Common myeloid progenitor, CD34-positive (primary cell): ENCODE measurements at regions of chr7 and their contacts with region 1.

Region 1: GRCh38 chr7:98841179-98841997 is 28.4 kb downstream of the TMEM130 start:
- DNase-seq: peak; percentile 46 to 66 (median 53)
- H3K4me3 ChIP-seq: no peak overlapping the region
- H3K27ac ChIP-seq: no peak overlapping the region
- H3K4me1 ChIP-seq: no peaks in the 10 kb centered on the region
- H3K27me3 ChIP-seq: peaks cover 0 to 6% (median 0%) of the 10 kb centered on the region in 5 experiments

Region 2: GRCh38 chr7:98420966-98421612 is 420.3 kb before region 1 on chr7:
- CTCF ChIA-PET with region 1: interaction called, 165 read pairs
- POLR2A ChIA-PET with region 1: no interaction called
- DNase-seq: peak; percentile 51 to 65 (median 61)
- H3K4me3 ChIP-seq: no peak overlapping the region
- H3K27ac ChIP-seq: no peak overlapping the region
- H3K4me1 ChIP-seq: peaks cover 0 to 3% (median 0%) of the 10 kb centered on the region in 4 experiments
- H3K27me3 ChIP-seq: peaks cover 0 to 8% (median 3%) of the 10 kb centered on the region in 5 experiments

Region 3: DNA sequence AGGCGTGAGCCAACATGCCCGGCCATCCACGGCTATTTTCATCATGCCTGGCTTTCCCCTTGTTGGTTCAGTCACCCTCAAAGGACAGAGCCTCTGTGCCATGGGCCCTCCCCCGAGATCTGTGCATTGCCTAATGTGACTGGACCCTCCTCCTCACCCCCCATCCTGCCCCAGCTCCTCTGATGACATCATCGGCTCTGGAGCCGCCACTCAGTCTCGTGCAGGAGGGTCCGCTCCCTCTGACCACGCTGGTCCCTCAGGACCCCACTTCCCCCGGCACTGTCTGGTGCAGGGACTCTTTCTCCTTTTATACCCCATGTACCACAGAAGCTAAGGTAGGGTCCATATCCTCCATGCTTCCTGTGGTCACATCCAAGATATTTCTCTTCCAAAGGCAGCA is 407.3 kb before region 1 on chr7:
- CTCF ChIA-PET with region 1: interaction called, 165 read pairs
- POLR2A ChIA-PET with region 1: no interaction called
- DNase-seq: no peak
- H3K4me3 ChIP-seq: no peak overlapping the region
- H3K27ac ChIP-seq: no peak overlapping the region
- H3K4me1 ChIP-seq: no peaks in the 10 kb centered on the region
- H3K27me3 ChIP-seq: peaks cover 0 to 2% (median 0%) of the 10 kb centered on the region in 5 experiments